CD4-positive, alpha-beta T cell (primary cell): ENCODE measurements at regions of chr11 and their contacts with region 1.

Region 1: DNA sequence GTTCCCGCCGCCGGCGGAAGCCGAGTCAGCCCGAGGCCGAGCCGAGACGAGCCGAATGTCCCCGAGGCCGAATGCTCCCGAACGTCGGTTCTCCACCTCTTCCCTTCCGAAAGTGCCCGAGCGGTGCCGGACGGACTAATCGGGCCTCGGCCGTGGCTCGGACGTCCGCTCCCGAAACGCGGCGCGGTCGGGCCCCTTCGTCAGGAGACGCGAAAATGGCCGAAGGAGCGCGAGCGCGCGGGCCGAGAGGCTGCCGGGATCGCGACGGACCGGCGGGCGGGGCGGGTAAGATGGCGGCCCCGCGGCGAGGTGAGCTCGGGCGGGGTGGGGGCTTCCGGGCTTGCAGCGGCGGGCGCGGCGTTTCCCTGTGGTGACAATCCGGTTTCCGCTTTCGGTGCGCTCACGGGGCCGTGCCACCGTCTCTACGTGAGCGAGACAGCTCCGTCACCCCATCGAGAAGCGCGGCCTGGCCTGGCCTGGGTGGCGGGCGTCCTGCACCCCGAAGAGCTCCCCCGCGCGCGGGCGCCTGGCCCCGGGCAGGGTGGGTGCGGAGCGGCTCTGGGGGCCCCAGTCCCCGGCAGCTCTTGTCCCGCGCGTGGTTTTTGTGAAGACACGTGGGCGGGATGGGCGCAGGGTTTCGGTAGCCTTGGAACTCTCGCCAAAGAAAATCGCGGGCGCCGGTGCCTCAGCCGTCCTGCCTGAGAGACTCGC is at the start of gene TMEM80:
- DNase-seq: peak; percentile 94 to 99 (median 97)
- ATAC-seq: peak; percentile 59
- H3K4me3 ChIP-seq: peak within 1 kb of the TSS; percentile 94
- H3K4me3 Mint-ChIP-seq: peak within 1 kb of the TSS; percentile 94
- H3K27ac ChIP-seq: peak within 1 kb of the TSS; percentile 99 to 100
- H3K27ac Mint-ChIP-seq: peak within 1 kb of the TSS; percentile 95
- H3K4me1 ChIP-seq: peaks cover 70% of the 10 kb centered on the region
- H3K4me1 Mint-ChIP-seq: peaks cover 51% of the 10 kb centered on the region
- H3K27me3 ChIP-seq: no peaks in the 10 kb centered on the region
- H3K27me3 Mint-ChIP-seq: no peaks in the 10 kb centered on the region
- CTCF ChIP-seq: no peak
- total RNA-seq, gene TMEM80: 21.0 to 22.0 TPM

Region 2: GRCh38 chr11:441418-442274 is 254.0 kb before region 1 on chr11 and contains the start of gene ANO9:
- CTCF ChIA-PET with region 1: no interaction called
- POLR2A ChIA-PET with region 1: no interaction called
- intact Hi-C with region 1: no loop called
- DNase-seq: peak; percentile 38 to 86 (median 58)
- ATAC-seq: peak; percentile 97
- H3K4me3 ChIP-seq: peak within 1 kb of the TSS; percentile 62
- H3K4me3 Mint-ChIP-seq: peak within 1 kb of the TSS; percentile 77
- H3K27ac ChIP-seq: peak within 1 kb of the TSS in 1 of 2 donors; percentile 41
- H3K27ac Mint-ChIP-seq: no peak within 1 kb of the TSS
- H3K4me1 ChIP-seq: peaks cover 56% of the 10 kb centered on the region
- H3K4me1 Mint-ChIP-seq: peaks cover 16% of the 10 kb centered on the region
- H3K27me3 ChIP-seq: no peaks in the 10 kb centered on the region
- H3K27me3 Mint-ChIP-seq: no peaks in the 10 kb centered on the region
- CTCF ChIP-seq: no peak
- total RNA-seq, gene ANO9: 109 to 114 TPM

Region 3: GRCh38 chr11:535519-536454 is 159.9 kb before region 1 on chr11 and contains the start of gene HRAS:
- CTCF ChIA-PET with region 1: no interaction called
- POLR2A ChIA-PET with region 1: interaction called, 4 read pairs
- intact Hi-C with region 1: loop called in 1 of 2 experiments (anchors 1 kb)
- DNase-seq: peak; percentile 89 to 99 (median 96)
- ATAC-seq: peak; percentile 90
- H3K4me3 ChIP-seq: peak within 1 kb of the TSS; percentile 71
- H3K4me3 Mint-ChIP-seq: peak within 1 kb of the TSS; percentile 98
- H3K27ac ChIP-seq: peak within 1 kb of the TSS; percentile 73 to 79
- H3K27ac Mint-ChIP-seq: peak within 1 kb of the TSS; percentile 93
- H3K4me1 ChIP-seq: peaks cover 44% of the 10 kb centered on the region
- H3K4me1 Mint-ChIP-seq: peaks cover 16% of the 10 kb centered on the region
- H3K27me3 ChIP-seq: no peaks in the 10 kb centered on the region
- H3K27me3 Mint-ChIP-seq: no peaks in the 10 kb centered on the region
- CTCF ChIP-seq: no peak
- total RNA-seq, gene HRAS: 23.7 to 23.9 TPM

Region 4: DNA sequence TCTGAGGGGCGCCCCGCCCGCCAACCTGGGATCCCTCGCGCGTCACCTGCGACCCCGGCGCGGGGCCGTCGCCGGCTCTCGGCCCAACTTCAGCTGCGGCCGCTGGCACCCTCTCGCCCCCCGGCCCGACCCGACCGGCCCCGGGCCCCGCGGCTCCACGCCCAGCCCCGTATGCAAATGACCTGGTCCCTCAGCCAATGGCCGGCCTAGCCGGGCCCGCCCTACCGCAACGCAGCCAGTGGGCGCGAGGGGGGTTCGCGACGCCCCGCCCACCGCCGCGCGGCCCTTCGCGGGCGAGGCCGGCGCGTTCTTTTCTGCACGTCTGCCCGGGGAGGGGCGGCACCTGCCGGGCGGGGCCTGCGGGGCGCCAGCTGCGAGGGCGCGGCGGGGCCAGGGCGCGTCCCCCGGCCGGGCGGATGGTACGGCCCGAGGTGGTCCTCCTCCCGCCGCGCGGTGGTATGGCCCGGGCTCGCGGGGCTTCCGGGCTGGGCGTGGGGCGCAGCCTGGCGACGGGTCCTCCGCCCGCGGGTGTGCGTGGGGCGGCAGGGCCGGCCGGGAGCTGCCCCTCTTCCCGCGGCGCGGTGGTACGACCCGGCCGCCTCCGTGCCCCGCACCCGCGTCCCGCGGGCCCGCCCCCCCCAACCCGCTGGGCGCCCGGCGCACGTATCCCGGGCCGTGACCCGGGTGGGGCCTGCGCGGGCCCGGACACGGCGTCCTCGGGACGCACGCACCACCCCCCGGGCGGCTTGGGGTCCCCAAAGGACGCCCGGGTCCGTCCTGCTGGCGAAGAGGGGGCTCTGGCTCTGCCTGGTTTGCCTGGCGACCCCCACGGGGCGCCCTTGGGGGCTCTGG is 127.2 kb before region 1 on chr11:
- CTCF ChIA-PET with region 1: no interaction called
- POLR2A ChIA-PET with region 1: interaction called, 11 read pairs
- intact Hi-C with region 1: loop called in 1 of 2 experiments (anchors 10 kb)
- DNase-seq: peak; percentile 81 to 97 (median 90)
- ATAC-seq: peak; percentile 91
- H3K4me3 ChIP-seq: peak overlapping the region; percentile 70
- H3K4me3 Mint-ChIP-seq: peak overlapping the region; percentile 82
- H3K27ac ChIP-seq: peak overlapping the region; percentile 17 to 69
- H3K27ac Mint-ChIP-seq: no peak overlapping the region
- H3K4me1 ChIP-seq: peaks cover 14% of the 10 kb centered on the region
- H3K4me1 Mint-ChIP-seq: peaks cover 4% of the 10 kb centered on the region
- H3K27me3 ChIP-seq: no peaks in the 10 kb centered on the region
- H3K27me3 Mint-ChIP-seq: no peaks in the 10 kb centered on the region
- CTCF ChIP-seq: no peak

Region 5: GRCh38 chr11:615504-616319 is 80.0 kb before region 1 on chr11 and contains the start of gene IRF7:
- CTCF ChIA-PET with region 1: no interaction called
- POLR2A ChIA-PET with region 1: interaction called, 12 read pairs
- intact Hi-C with region 1: loop called in 1 of 2 experiments (anchors 5 kb)
- DNase-seq: peak; percentile 67 to 93 (median 86)
- ATAC-seq: peak; percentile 65
- H3K4me3 ChIP-seq: peak within 1 kb of the TSS; percentile 97
- H3K4me3 Mint-ChIP-seq: peak within 1 kb of the TSS; percentile 96
- H3K27ac ChIP-seq: peak within 1 kb of the TSS; percentile 83 to 95
- H3K27ac Mint-ChIP-seq: peak within 1 kb of the TSS; percentile 89
- H3K4me1 ChIP-seq: peaks cover 34% of the 10 kb centered on the region
- H3K4me1 Mint-ChIP-seq: peaks cover 16% of the 10 kb centered on the region
- H3K27me3 ChIP-seq: no peaks in the 10 kb centered on the region
- H3K27me3 Mint-ChIP-seq: no peaks in the 10 kb centered on the region
- CTCF ChIP-seq: no peak
- total RNA-seq, gene IRF7: 36.5 to 37.7 TPM

Region 6: DNA sequence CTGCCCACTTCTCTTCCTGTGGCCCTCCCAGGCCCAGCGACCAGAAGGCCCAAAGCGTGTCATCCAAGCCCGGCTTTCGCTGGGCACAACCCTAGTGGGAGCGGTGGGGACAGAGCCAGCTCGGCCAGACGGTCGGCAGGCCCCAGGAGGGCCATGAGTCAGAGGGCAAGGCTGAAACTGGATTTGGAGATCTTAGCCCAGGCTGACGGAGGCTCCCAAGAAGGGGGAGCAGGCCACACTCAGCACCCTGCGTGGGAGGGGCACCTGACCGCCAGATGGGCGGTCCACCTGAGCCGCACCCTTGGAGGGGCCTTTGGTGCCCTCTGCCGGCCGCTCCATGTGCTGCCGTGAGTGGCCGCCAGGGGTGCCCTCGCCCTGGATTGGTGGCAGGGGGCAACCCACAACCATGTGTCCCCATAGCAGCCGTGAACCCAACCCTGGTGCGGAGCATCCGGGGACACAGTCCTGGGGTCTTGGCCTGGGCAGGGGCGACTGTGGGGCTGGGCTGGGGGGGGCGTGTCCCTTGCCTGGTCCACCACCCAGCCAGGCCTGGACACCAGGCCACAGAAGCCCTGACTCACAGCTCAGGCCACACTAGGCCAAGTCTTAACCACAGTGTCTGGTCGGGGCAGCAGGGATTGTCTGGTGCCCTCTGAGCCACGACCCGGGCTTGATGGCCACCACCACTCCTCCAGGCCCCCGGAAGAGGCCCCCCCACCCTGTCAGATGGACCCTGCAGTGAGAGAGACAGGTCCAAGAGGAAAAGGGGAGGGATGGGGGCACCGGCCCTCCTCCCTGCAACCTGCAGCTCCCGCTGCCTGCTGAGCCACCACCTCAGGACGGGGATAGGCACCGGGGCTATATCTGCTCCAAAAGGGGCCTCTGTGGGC is 32.4 kb after region 1 on chr11:
- CTCF ChIA-PET with region 1: interaction called, 16 read pairs
- POLR2A ChIA-PET with region 1: interaction called, 41 read pairs
- intact Hi-C with region 1: loop called (anchors 1 to 5 kb)
- DNase-seq: peak; percentile 63 to 90 (median 76)
- ATAC-seq: peak; percentile 83
- H3K4me3 ChIP-seq: no peak overlapping the region
- H3K4me3 Mint-ChIP-seq: no peak overlapping the region
- H3K27ac ChIP-seq: no peak overlapping the region
- H3K27ac Mint-ChIP-seq: no peak overlapping the region
- H3K4me1 ChIP-seq: peaks cover 36% of the 10 kb centered on the region
- H3K4me1 Mint-ChIP-seq: peaks cover 5% of the 10 kb centered on the region
- H3K27me3 ChIP-seq: no peaks in the 10 kb centered on the region
- H3K27me3 Mint-ChIP-seq: peaks cover 9% of the 10 kb centered on the region
- CTCF ChIP-seq: peak; percentile 98

Region 7: DNA sequence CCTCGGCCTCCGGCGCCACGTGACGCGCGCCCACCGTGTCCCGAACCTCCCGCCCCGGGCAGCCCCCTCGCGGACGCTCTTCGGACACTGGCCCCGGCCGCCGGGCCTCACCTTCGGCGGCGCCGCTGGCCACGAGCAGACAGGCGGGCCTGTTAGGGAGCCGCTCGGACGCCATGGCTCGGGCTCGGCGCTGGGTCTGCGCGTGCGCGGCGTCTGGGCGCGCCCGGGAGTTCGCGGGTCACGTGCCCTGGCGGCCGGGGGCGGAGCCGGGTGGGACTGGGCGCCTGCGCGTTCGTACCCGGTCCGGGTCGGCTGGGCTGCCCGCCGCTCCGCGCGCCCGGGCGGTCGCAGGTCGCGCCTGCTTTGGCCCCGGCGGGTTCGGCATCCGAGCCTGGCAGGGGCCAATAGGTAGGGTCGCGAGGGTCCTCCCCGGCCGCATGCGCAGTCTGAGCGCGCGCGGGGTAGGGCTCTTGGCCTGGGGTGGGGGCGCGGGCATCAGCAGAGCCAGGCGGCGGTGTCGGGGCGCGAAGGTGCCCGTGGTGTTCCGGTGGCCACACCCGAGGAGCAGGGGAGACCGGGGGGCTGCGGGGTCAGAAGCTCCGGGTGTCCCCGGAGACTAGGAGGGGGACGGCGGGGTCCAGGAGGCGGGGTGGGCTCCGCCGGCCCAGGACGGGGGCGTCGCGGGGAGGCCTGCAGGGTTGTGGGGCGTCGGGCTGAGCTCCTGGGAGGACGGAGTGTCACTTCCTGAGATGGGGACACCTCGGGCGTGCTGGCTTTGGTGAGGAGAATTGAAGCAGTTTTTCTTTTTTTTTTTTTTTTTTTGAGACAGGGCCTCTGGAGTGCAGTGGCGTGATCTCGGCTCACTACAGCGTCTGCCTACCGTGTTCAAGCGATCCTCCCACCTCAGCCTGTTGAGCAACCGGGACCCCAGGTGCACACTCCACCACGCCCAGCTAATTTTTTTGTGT is 81.9 kb after region 1 on chr11 and contains the start of gene GATD1:
- CTCF ChIA-PET with region 1: no interaction called
- POLR2A ChIA-PET with region 1: interaction called, 3 read pairs
- intact Hi-C with region 1: loop called in 1 of 2 experiments (anchors 1 kb)
- DNase-seq: peak; percentile 85 to 96 (median 93)
- ATAC-seq: peak; percentile 87
- H3K4me3 ChIP-seq: peak within 1 kb of the TSS; percentile 67
- H3K4me3 Mint-ChIP-seq: peak within 1 kb of the TSS; percentile 90
- H3K27ac ChIP-seq: peak within 1 kb of the TSS in 1 of 2 donors; percentile 56
- H3K27ac Mint-ChIP-seq: peak within 1 kb of the TSS; percentile 77
- H3K4me1 ChIP-seq: peaks cover 48% of the 10 kb centered on the region
- H3K4me1 Mint-ChIP-seq: peaks cover 11% of the 10 kb centered on the region
- H3K27me3 ChIP-seq: no peaks in the 10 kb centered on the region
- H3K27me3 Mint-ChIP-seq: no peaks in the 10 kb centered on the region
- CTCF ChIP-seq: no peak
- total RNA-seq, gene GATD1: 14.7 to 16.1 TPM